ENCODE measurements at regions of chr14 and their contacts with region 1.

Region 1: GRCh38 chr14:22852940-22853767 is 16.8 kb downstream of the MMP14 start:
- DNase-seq: peak; percentile 75 to 94 (median 87)
- ATAC-seq: peak; percentile 96
- H3K4me3 ChIP-seq: peak overlapping the region; percentile 74
- H3K4me3 Mint-ChIP-seq: peak overlapping the region; percentile 81 to 89 (median 86)
- H3K27ac ChIP-seq: peak overlapping the region; percentile 72
- H3K27ac Mint-ChIP-seq: peak overlapping the region in 7 of 9 donors; percentile 71 to 85 (median 81)
- H3K4me1 ChIP-seq: peaks cover 3% of the 10 kb centered on the region in 2 donors
- H3K4me1 Mint-ChIP-seq: peaks cover 8 to 30% (median 21%) of the 10 kb centered on the region in 7 donors
- H3K27me3 ChIP-seq: no peaks in the 10 kb centered on the region
- H3K27me3 Mint-ChIP-seq: peaks cover 0 to 19% (median 6%) of the 10 kb centered on the region in 5 donors

Region 2: DNA sequence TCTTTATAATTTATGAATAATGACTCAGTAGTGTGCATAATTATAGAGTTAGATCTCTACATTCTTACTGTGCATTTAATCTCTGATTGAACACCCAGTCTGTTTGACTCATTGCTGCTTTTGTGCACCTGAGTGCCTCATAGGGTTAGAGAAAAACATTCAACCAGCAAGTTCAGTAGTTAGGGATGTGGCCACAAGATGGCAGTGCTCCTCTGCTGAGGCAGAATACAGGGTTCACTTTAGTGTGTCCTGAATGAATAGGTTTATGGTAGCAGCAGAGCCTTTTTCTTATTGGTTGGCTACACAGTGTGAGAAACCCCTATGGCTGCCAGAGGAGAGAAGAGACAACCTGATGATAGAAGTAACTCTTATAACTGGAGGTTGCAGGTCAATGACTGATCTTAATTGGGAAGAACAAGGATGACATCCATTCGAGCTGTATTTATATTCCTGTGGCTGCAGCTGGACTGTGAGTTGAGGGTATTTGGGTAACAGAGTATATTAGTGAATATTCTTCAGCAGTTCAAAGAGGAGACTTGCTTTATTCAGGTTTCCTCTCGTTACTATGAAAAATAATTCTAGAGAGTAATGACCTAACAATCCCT is 984.6 kb before region 1 on chr14:
- CTCF ChIA-PET with region 1: no interaction called
- POLR2A ChIA-PET with region 1: no interaction called
- intact Hi-C with region 1: loop called in 1 of 2 experiments (anchors 10 kb)
- DNase-seq: peak; percentile 33 to 79 (median 70)
- ATAC-seq: peak; percentile 97
- H3K4me3 ChIP-seq: peak overlapping the region; percentile 16
- H3K4me3 Mint-ChIP-seq: peak overlapping the region; percentile 18 to 85 (median 74)
- H3K27ac ChIP-seq: peak overlapping the region; percentile 25
- H3K27ac Mint-ChIP-seq: peak overlapping the region; percentile 8 to 88 (median 59)
- H3K4me1 ChIP-seq: peaks cover 4 to 8% of the 10 kb centered on the region in 2 donors
- H3K4me1 Mint-ChIP-seq: peaks cover 3 to 54% (median 25%) of the 10 kb centered on the region in 7 donors
- H3K27me3 ChIP-seq: peaks cover 0 to 3% of the 10 kb centered on the region in 2 donors
- H3K27me3 Mint-ChIP-seq: peaks cover 0 to 6% (median 0%) of the 10 kb centered on the region in 5 donors

Region 3: GRCh38 chr14:22822571-22823098 is 30.5 kb before region 1 on chr14:
- CTCF ChIA-PET with region 1: interaction called, 143 read pairs
- POLR2A ChIA-PET with region 1: interaction called, 8 read pairs
- intact Hi-C with region 1: loop called (anchors 1 kb)
- DNase-seq: peak; percentile 50 to 71 (median 65)
- ATAC-seq: peak; percentile 83
- H3K4me3 ChIP-seq: peak overlapping the region; percentile 38
- H3K4me3 Mint-ChIP-seq: peak overlapping the region; percentile 47 to 78 (median 66)
- H3K27ac ChIP-seq: no peak overlapping the region
- H3K27ac Mint-ChIP-seq: peak overlapping the region in 3 of 9 donors; percentile 11 to 36 (median 22)
- H3K4me1 ChIP-seq: peaks cover 0 to 17% of the 10 kb centered on the region in 2 donors
- H3K4me1 Mint-ChIP-seq: peaks cover 6 to 37% (median 24%) of the 10 kb centered on the region in 7 donors
- H3K27me3 ChIP-seq: no peaks in the 10 kb centered on the region
- H3K27me3 Mint-ChIP-seq: peaks cover 0 to 16% (median 4%) of the 10 kb centered on the region in 5 donors

Region 4: GRCh38 chr14:22865424-22866405 is 12.6 kb after region 1 on chr14:
- CTCF ChIA-PET with region 1: interaction called, 23 read pairs
- POLR2A ChIA-PET with region 1: interaction called, 29 read pairs
- intact Hi-C with region 1: loop called (anchors 2 kb)
- DNase-seq: no peak
- ATAC-seq: no peak
- H3K4me3 ChIP-seq: no peak overlapping the region
- H3K4me3 Mint-ChIP-seq: no peak overlapping the region
- H3K27ac ChIP-seq: no peak overlapping the region
- H3K27ac Mint-ChIP-seq: peak overlapping the region in 6 of 9 donors; percentile 22 to 77 (median 62)
- H3K4me1 ChIP-seq: peaks cover 11 to 21% of the 10 kb centered on the region in 2 donors
- H3K4me1 Mint-ChIP-seq: peaks cover 7 to 33% (median 19%) of the 10 kb centered on the region in 7 donors
- H3K27me3 ChIP-seq: no peaks in the 10 kb centered on the region
- H3K27me3 Mint-ChIP-seq: peaks cover 0 to 18% (median 0%) of the 10 kb centered on the region in 5 donors

Region 5: GRCh38 chr14:22886500-22887259 is 33.5 kb after region 1 on chr14:
- CTCF ChIA-PET with region 1: interaction called, 11 read pairs
- POLR2A ChIA-PET with region 1: interaction called, 5 read pairs
- intact Hi-C with region 1: no loop called
- DNase-seq: peak; percentile 42 to 75 (median 69)
- ATAC-seq: peak; percentile 80
- H3K4me3 ChIP-seq: peak overlapping the region; percentile 77
- H3K4me3 Mint-ChIP-seq: peak overlapping the region; percentile 88 to 100 (median 92)
- H3K27ac ChIP-seq: peak overlapping the region; percentile 75
- H3K27ac Mint-ChIP-seq: peak overlapping the region; percentile 85 to 98 (median 96)
- H3K4me1 ChIP-seq: peaks cover 21 to 53% of the 10 kb centered on the region in 2 donors
- H3K4me1 Mint-ChIP-seq: peaks cover 39 to 80% (median 72%) of the 10 kb centered on the region in 7 donors
- H3K27me3 ChIP-seq: no peaks in the 10 kb centered on the region
- H3K27me3 Mint-ChIP-seq: peaks cover 0 to 21% (median 0%) of the 10 kb centered on the region in 5 donors

Measured in naive thymus-derived CD4-positive, alpha-beta T cell (primary cell).